Activated naive CD4-positive, alpha-beta T cell treated with anti-CD3 and anti-CD28 coated beads, Interleukin-2, amount 10 ng/mL, durations not matched to agents 7 days and 5 days (primary cell): ENCODE measurements at regions of chr17 and their contacts with region 1.

Region 1: DNA sequence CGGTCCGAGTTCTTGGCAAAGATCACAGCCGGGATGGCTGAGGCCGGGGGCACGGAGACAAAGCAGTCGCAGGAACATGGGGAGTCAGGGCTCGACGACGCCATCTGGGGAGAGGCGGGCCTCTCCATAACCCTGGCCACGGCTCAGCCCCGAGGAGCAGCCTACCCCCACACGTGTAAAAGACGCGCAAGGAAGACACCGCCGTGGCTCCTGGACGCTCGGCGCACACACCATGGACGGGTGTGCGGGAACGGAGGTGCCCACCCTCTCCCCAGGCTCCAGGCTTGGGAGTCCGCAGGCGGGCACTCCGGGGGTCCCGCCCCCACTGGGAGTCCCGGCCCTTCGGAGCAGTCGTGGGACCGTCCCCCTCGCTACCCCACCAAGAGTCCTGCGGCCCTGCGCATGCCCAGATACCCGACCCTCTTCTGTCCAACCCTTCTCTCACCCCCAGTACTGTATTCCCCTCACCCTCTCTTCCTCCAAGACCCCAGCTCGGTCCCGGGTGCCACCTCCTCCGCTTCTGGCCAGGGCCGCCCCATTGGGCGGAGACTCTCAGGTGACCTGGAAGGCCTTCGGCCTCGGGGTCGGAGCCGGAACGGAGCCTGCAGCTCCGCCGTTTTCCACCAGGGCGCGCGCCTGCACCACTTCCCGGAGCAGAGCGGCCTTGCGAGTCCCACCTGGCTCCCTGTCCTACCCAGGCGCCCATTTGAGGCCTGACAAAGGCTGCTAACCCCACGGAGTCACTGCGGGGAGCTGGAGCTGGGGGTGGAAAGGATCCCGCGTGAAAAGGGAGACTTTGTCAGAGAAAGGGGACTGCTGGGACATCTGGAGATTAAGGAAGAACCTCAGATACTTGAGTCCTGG is at the start of gene SCRN2:
- DNase-seq: peak; percentile 91
- H3K4me3 Mint-ChIP-seq: peak within 1 kb of the TSS; percentile 98
- H3K27ac Mint-ChIP-seq: peak within 1 kb of the TSS; percentile 87
- H3K4me1 Mint-ChIP-seq: peaks cover 41% of the 10 kb centered on the region
- H3K27me3 Mint-ChIP-seq: peaks cover 26% of the 10 kb centered on the region

Region 2: GRCh38 chr17:47776330-47777197 is 64.4 kb before region 1 on chr17:
- CTCF ChIA-PET with region 1: no interaction called
- DNase-seq: peak; percentile 46
- H3K4me3 Mint-ChIP-seq: no peak overlapping the region
- H3K27ac Mint-ChIP-seq: no peak overlapping the region
- H3K4me1 Mint-ChIP-seq: no peaks in the 10 kb centered on the region
- H3K27me3 Mint-ChIP-seq: peaks cover 80% of the 10 kb centered on the region

Region 3: GRCh38 chr17:47821424-47822391 is 19.3 kb before region 1 on chr17 and contains the start of gene OSBPL7:
- CTCF ChIA-PET with region 1: interaction called, 10 read pairs
- DNase-seq: peak; percentile 88
- H3K4me3 Mint-ChIP-seq: peak within 1 kb of the TSS; percentile 99
- H3K27ac Mint-ChIP-seq: peak within 1 kb of the TSS; percentile 94
- H3K4me1 Mint-ChIP-seq: peaks cover 33% of the 10 kb centered on the region
- H3K27me3 Mint-ChIP-seq: no peaks in the 10 kb centered on the region

Region 4: GRCh38 chr17:47864770-47865216 is 23.8 kb after region 1 on chr17:
- CTCF ChIA-PET with region 1: interaction called, 10 read pairs
- DNase-seq: peak; percentile 46
- H3K4me3 Mint-ChIP-seq: no peak overlapping the region
- H3K27ac Mint-ChIP-seq: peak overlapping the region; percentile 72
- H3K4me1 Mint-ChIP-seq: peaks cover 32% of the 10 kb centered on the region
- H3K27me3 Mint-ChIP-seq: peaks cover 63% of the 10 kb centered on the region

Region 5: DNA sequence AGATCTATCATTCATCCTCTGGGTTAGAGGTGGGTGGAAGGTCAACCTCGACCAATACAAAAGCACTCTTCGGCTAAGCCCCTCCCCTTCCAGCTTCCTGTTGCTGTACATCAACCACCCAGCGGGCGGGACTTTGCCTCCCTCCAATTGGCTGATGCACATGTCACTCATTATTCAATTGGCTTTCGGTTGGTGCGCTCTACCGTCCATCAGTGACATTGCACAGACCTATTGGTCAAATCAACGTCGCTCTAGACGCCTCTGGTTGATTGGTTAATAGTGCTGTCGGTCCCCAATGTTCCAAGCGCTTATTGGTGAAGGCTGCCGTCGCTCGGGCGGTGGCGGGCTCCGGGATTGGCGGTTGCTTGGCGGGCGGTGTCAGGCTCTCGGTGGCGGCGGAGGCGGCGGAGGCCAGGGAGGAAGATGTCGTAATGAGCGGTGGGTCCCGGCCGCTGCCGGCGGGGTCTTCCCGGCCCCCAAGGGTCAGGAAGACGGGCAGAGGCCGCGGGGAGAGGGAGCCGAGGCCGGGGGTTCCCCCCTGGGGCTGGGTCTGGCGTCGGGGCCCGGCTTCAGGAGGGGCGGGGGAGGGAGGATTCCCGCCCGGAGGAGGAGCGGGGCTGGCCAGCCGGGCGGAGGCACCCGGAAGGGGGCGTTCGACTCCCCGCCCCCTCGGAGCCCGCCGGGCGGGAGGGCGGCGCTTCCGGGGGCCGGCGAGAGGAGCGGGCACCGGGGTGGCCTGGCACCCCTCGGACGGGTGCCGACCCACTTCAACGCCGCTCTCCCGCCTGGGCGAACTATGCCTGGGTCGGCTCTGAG is 55.1 kb after region 1 on chr17 and contains the start of gene SP2:
- CTCF ChIA-PET with region 1: interaction called, 547 read pairs
- DNase-seq: peak; percentile 100
- H3K4me3 Mint-ChIP-seq: peak within 1 kb of the TSS; percentile 92
- H3K27ac Mint-ChIP-seq: peak within 1 kb of the TSS; percentile 98
- H3K4me1 Mint-ChIP-seq: peaks cover 49% of the 10 kb centered on the region
- H3K27me3 Mint-ChIP-seq: no peaks in the 10 kb centered on the region

Region 6: DNA sequence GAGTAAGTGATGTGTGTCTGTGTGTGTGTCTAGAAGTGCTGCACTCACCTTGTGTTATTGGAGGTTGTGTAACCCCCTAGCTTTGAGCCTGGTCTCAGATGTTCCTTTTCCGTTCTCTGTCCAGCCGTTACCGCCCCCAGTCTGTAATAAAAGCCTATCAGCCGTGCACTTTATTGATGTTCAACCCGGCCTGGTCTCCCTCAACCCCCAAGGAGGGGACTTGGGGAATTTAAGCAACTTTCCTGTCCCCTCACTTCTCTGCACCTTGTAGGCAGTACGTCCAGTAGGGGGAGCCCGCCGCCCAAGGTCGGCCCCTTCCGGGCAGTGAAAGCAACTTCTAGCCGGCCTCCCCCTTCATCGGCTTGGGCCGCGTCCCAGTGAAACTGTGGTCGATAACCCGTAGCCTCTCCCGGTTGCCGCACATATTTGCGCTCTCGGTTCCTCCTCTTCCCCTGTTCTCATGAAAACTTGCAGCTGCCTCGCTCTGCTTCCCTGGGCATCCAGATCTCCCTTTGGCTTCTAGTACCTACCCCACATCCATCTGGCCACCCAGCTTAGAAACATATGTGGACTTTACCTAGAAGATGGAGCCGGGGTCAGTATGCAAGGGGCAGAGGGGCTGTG is 108.3 kb after region 1 on chr17:
- CTCF ChIA-PET with region 1: interaction called, 10 read pairs
- DNase-seq: peak; percentile 89
- H3K4me3 Mint-ChIP-seq: peak overlapping the region; percentile 25
- H3K27ac Mint-ChIP-seq: peak overlapping the region; percentile 22
- H3K4me1 Mint-ChIP-seq: peaks cover 50% of the 10 kb centered on the region
- H3K27me3 Mint-ChIP-seq: no peaks in the 10 kb centered on the region

Region 7: GRCh38 chr17:47970704-47971463 is 129.9 kb after region 1 on chr17 and contains the start of gene CDK5RAP3:
- CTCF ChIA-PET with region 1: interaction called, 19 read pairs
- DNase-seq: peak; percentile 100
- H3K4me3 Mint-ChIP-seq: peak within 1 kb of the TSS; percentile 98
- H3K27ac Mint-ChIP-seq: peak within 1 kb of the TSS; percentile 94
- H3K4me1 Mint-ChIP-seq: peaks cover 30% of the 10 kb centered on the region
- H3K27me3 Mint-ChIP-seq: peaks cover 15% of the 10 kb centered on the region

Region 8: GRCh38 chr17:48011405-48012150 is 170.6 kb after region 1 on chr17:
- CTCF ChIA-PET with region 1: interaction called, 25 read pairs
- DNase-seq: peak; percentile 73
- H3K4me3 Mint-ChIP-seq: peak overlapping the region; percentile 64
- H3K27ac Mint-ChIP-seq: no peak overlapping the region
- H3K4me1 Mint-ChIP-seq: peaks cover 30% of the 10 kb centered on the region
- H3K27me3 Mint-ChIP-seq: peaks cover 72% of the 10 kb centered on the region

Region 9: GRCh38 chr17:48084932-48085444 is 244.0 kb after region 1 on chr17:
- CTCF ChIA-PET with region 1: no interaction called
- DNase-seq: no peak
- H3K4me3 Mint-ChIP-seq: no peak overlapping the region
- H3K27ac Mint-ChIP-seq: no peak overlapping the region
- H3K4me1 Mint-ChIP-seq: peaks cover 13% of the 10 kb centered on the region
- H3K27me3 Mint-ChIP-seq: no peaks in the 10 kb centered on the region